HepG2 (cell line): ENCODE measurements at regions of chr2 and their contacts with region 1.

Region 1: DNA sequence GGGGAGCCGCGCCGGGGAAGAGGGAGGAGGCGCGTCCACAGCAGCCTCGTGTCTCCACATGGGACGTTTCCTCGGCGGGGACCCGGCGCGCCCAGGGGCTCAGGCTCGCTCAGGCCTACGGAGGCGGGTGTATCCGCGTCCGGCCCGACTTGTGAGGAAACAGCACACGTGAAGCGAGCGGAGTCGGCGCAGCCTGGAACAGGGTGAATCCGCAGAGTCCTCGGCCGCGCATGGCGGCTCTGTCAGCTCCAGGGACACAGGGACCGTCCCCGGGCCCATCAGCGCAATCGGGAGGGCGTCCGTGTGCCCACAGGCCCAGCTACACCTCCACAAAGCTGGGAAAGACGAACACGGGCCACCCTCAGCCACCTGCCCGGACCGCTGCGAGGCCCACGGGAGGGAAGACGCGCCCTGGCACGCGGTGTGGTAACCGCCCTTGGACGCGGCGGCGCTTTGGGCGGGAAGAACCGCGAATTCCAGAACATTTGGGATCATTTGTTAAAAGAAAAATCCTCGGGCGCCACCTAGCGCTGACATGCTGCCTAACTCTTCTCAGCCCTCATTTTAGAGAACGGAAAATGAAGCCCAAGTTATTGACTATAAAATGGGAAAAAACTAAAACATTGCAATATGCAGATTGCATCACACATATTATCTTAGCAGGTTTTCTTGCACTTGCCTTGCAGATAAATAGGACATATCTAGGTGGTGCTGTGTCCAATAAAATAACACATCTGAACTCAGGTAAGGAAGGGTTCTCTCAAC is 40.4 kb downstream of the TMEM18 start:
- DNase-seq: peak; percentile 49
- ATAC-seq: peak; percentile 80
- H3K4me3 ChIP-seq: no peak overlapping the region
- H3K27ac ChIP-seq: no peak overlapping the region
- H3K4me1 ChIP-seq: no peaks in the 10 kb centered on the region
- H3K27me3 ChIP-seq: peaks cover 2 to 20% of the 10 kb centered on the region in 2 experiments; a peak in 3 of 5 replicates
- CTCF ChIP-seq: peak; percentile 89
- EP300 ChIP-seq: no peak
- POLR2A ChIP-seq: no peak
- RAD21 ChIP-seq: peak; percentile 66

Region 2: GRCh38 chr2:290090-290722 is 346.6 kb before region 1 on chr2:
- CTCF ChIA-PET with region 1: interaction called, 3 read pairs
- POLR2A ChIA-PET with region 1: no interaction called
- in situ Hi-C with region 1: loop called (anchors 5 kb)
- intact Hi-C with region 1: loop called (anchors 2 kb)
- DNase-seq: peak; percentile 76
- ATAC-seq: peak; percentile 83
- H3K4me3 ChIP-seq: peak overlapping the region; percentile 55 to 82 (median 65)
- H3K27ac ChIP-seq: no peak overlapping the region
- H3K4me1 ChIP-seq: peaks cover 16% of the 10 kb centered on the region
- H3K27me3 ChIP-seq: peaks cover 3 to 19% of the 10 kb centered on the region in 2 experiments
- CTCF ChIP-seq: peak; percentile 96
- EP300 ChIP-seq: no peak
- POLR2A ChIP-seq: no peak
- RAD21 ChIP-seq: peak; percentile 96

Region 3: GRCh38 chr2:529425-529824 is 107.4 kb before region 1 on chr2:
- CTCF ChIA-PET with region 1: interaction called, 7 read pairs
- POLR2A ChIA-PET with region 1: no interaction called
- in situ Hi-C with region 1: loop called (anchors 5 kb)
- intact Hi-C with region 1: loop called (anchors 1 kb)
- DNase-seq: peak; percentile 48
- ATAC-seq: 0 out of 3 replicates have a peak, but pooled peaks have one; percentile 53
- H3K4me3 ChIP-seq: no peak overlapping the region
- H3K27ac ChIP-seq: no peak overlapping the region
- H3K4me1 ChIP-seq: no peaks in the 10 kb centered on the region
- H3K27me3 ChIP-seq: peaks cover 0 to 12% of the 10 kb centered on the region in 2 experiments; a peak in 1 of 5 replicates
- CTCF ChIP-seq: peak; percentile 43
- EP300 ChIP-seq: no peak
- POLR2A ChIP-seq: no peak
- RAD21 ChIP-seq: no peak